Panc1 (cell line): ENCODE measurements at regions of chr19 and their contacts with region 1.

Region 1: GRCh38 chr19:5434351-5434917 is 20.8 kb upstream of the ZNRF4 start:
- DNase-seq: no peak
- ATAC-seq: peak; percentile 35
- H3K4me3 ChIP-seq: no peak overlapping the region
- H3K27ac ChIP-seq: no peak overlapping the region; the same call in 1 of the 2 replicates
- H3K4me1 ChIP-seq: peaks cover 9% of the 10 kb centered on the region; the same call in 1 of the 2 replicates
- H3K27me3 ChIP-seq: no peaks in the 10 kb centered on the region
- CTCF ChIP-seq: no peak

Region 2: GRCh38 chr19:5452594-5453565 is 18.4 kb after region 1 on chr19:
- CTCF ChIA-PET with region 1: no interaction called
- POLR2A ChIA-PET with region 1: no interaction called
- in situ Hi-C with region 1: no loop called
- intact Hi-C with region 1: no loop called
- DNase-seq: no peak
- ATAC-seq: peak; percentile 70
- H3K4me3 ChIP-seq: no peak overlapping the region
- H3K27ac ChIP-seq: no peak overlapping the region
- H3K4me1 ChIP-seq: no peaks in the 10 kb centered on the region
- H3K27me3 ChIP-seq: no peaks in the 10 kb centered on the region
- CTCF ChIP-seq: no peak

Region 3: GRCh38 chr19:5466814-5467291 is 32.4 kb after region 1 on chr19:
- CTCF ChIA-PET with region 1: no interaction called
- POLR2A ChIA-PET with region 1: interaction called, 13 read pairs
- in situ Hi-C with region 1: no loop called
- intact Hi-C with region 1: no loop called
- DNase-seq: no peak
- ATAC-seq: no peak
- H3K4me3 ChIP-seq: no peak overlapping the region
- H3K27ac ChIP-seq: no peak overlapping the region
- H3K4me1 ChIP-seq: no peaks in the 10 kb centered on the region
- H3K27me3 ChIP-seq: no peaks in the 10 kb centered on the region
- CTCF ChIP-seq: no peak

Region 4: DNA sequence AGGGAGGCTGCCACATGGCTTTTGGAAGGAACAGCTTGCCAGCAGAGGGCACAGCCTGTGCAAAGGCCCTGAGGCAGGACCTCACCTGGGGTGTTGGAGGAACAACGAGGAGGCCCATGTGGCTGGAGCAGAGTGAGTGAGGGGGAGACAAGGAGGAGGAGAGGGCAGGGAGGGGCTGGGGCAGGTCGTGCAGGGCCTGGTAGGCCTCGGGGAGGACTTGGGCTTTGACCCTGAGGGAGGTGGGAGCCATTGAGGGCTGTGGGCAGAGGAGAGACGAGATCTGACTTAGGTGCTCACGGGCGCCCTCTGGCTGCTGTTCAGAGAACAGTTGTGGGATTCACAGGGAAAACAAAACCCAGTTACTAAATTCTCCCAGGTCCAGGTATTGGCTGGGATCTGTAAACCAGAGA is 46.0 kb after region 1 on chr19:
- CTCF ChIA-PET with region 1: interaction called, 11 read pairs
- POLR2A ChIA-PET with region 1: no interaction called
- in situ Hi-C with region 1: no loop called
- intact Hi-C with region 1: no loop called
- DNase-seq: peak; percentile 4
- ATAC-seq: peak; percentile 63; the same call in 1 of the 2 replicates
- H3K4me3 ChIP-seq: no peak overlapping the region
- H3K27ac ChIP-seq: no peak overlapping the region
- H3K4me1 ChIP-seq: no peaks in the 10 kb centered on the region
- H3K27me3 ChIP-seq: no peaks in the 10 kb centered on the region
- CTCF ChIP-seq: peak; percentile 82

Region 5: DNA sequence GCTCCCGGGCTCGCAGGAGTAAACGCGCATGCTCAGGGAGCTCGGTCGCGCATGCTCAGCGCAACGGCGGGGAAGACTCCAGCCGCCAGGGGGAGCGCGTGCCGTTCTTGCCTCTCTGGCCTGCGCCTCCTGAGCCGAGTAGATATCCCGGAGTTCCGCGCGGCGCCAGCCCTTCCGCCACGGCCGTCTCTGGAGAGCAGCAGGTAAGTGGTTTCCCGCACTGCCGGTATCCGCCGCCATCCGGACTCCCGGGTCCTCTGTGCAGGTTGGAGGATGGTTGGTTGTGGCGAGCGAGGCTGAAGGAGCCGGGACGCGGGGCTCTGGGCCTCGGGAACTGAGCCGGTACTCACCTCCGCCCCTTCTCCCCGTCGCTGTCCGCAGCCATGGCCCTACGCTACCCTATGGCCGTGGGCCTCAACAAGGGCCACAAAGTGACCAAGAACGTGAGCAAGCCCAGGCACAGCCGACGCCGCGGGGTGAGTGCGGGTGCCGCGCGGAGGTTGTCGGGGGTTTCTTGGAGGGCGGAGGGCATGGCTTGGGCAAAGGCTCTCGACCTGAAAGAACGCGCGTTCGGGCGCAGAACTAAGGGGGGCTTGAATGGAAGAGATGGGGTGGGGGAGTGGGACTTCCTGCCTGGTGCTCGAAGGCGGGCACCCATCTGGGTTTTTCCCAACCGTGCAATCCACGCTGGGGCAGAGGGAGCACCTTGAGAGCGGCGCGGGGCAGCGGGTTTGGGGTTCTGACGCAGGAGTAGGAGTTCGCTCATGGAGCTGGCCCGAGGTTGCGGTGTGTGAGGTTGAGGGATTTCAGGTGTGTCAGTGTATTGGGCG is 255.9 kb after region 1 on chr19 and contains the start of gene RPL36:
- CTCF ChIA-PET with region 1: no interaction called
- POLR2A ChIA-PET with region 1: no interaction called
- in situ Hi-C with region 1: no loop called
- intact Hi-C with region 1: no loop called
- DNase-seq: peak; percentile 83
- ATAC-seq: peak; percentile 62
- H3K4me3 ChIP-seq: peak within 1 kb of the TSS; percentile 82 to 89
- H3K27ac ChIP-seq: peak within 1 kb of the TSS; percentile 90
- H3K4me1 ChIP-seq: peaks cover 12% of the 10 kb centered on the region
- H3K27me3 ChIP-seq: no peaks in the 10 kb centered on the region
- CTCF ChIP-seq: peak; percentile 92
- total RNA-seq, gene RPL36: 465 TPM